Mammary epithelial cell (primary cell): ENCODE measurements at regions of chr18 and their contacts with region 1.

Region 1: DNA sequence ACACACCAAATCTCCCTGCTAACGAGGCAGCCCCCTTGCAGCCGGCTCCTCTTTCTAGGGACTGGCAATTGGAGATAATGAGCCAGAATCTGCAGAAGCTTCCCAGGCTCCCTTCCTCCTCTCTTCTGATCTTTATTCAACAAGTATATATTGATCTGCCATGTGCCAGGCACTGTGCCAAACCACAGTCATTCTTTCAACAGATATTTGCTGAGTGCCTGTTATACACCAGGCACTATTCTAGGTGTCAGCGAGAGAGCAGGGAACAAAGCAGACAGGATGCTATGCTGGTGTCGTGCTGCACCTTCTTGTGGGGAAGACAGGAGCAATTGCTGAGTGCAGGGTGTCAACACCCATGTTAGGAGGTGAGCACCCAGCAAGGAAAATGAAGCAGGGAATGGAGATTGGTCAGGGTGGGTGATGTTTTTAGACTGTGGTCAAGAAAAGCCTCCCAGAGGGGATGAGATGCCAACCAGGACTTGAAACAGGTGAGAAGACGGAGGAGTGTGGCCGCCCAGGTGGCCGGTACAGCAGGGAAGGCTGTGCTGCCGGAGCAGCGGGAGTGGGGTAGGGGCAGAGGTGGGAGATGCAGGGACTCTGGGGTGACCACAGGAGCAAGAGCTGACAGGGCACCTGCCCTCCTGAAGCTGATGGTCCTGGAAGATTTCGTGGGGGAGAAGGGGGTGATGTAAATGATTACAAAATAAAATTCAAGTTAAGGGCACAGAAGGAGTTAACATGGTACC is 307.6 kb upstream of the RAB12 start:
- DNase-seq: no peak
- H3K4me3 ChIP-seq: no peak overlapping the region
- H3K27ac ChIP-seq: no peak overlapping the region
- H3K4me1 ChIP-seq: no peaks in the 10 kb centered on the region
- H3K27me3 ChIP-seq: no peaks in the 10 kb centered on the region
- CTCF ChIP-seq: no peak

Region 2: GRCh38 chr18:8045884-8046281 is 255.7 kb before region 1 on chr18:
- CTCF ChIA-PET with region 1: interaction called, 11 read pairs
- dilution Hi-C with region 1: no loop called
- in situ Hi-C with region 1: no loop called
- intact Hi-C with region 1: no loop called
- DNase-seq: no peak
- H3K4me3 ChIP-seq: no peak overlapping the region
- H3K27ac ChIP-seq: no peak overlapping the region
- H3K4me1 ChIP-seq: no peaks in the 10 kb centered on the region
- H3K27me3 ChIP-seq: no peaks in the 10 kb centered on the region
- CTCF ChIP-seq: no peak